Sigmoid colon (tissue), 7 donors: ENCODE measurements at regions of chr1 and their contacts with region 1.

Region 1: GRCh38 chr1:201982623-201983379 is at the start of gene RNPEP:
- DNase-seq: peak; percentile 90
- H3K4me3 ChIP-seq: peak within 1 kb of the TSS; percentile 70 to 100 (median 96)
- H3K27ac ChIP-seq: peak within 1 kb of the TSS; percentile 92 to 96 (median 94)
- H3K4me1 ChIP-seq: peaks cover 0 to 18% (median 15%) of the 10 kb centered on the region in 4 donors
- H3K27me3 ChIP-seq: no peaks in the 10 kb centered on the region
- CTCF ChIP-seq: peak in 2 of 4 experiments; percentile 15 to 18
- EP300 ChIP-seq: no peak
- POLR2A ChIP-seq: no peak
- total RNA-seq, gene RNPEP: 23.9 to 38.5 (median 32.0) TPM

Region 2: GRCh38 chr1:201828820-201829774 is 153.7 kb before region 1 on chr1 and contains the start of gene IPO9:
- intact Hi-C with region 1: loop called (anchors 5 kb)
- DNase-seq: peak; percentile 96
- H3K4me3 ChIP-seq: peak within 1 kb of the TSS; percentile 83 to 99 (median 92)
- H3K27ac ChIP-seq: peak within 1 kb of the TSS; percentile 88 to 97 (median 92)
- H3K4me1 ChIP-seq: peaks cover 0 to 39% (median 35%) of the 10 kb centered on the region in 4 donors
- H3K27me3 ChIP-seq: no peaks in the 10 kb centered on the region
- CTCF ChIP-seq: peak; percentile 87 to 96 (median 92)
- EP300 ChIP-seq: no peak
- POLR2A ChIP-seq: no peak
- total RNA-seq, gene IPO9: 15.5 to 20.2 (median 17.9) TPM

Region 3: GRCh38 chr1:202046227-202046801 is 63.5 kb after region 1 on chr1:
- intact Hi-C with region 1: no loop called
- DNase-seq: no peak
- H3K4me3 ChIP-seq: no peak overlapping the region
- H3K27ac ChIP-seq: no peak overlapping the region
- H3K4me1 ChIP-seq: no peaks in the 10 kb centered on the region
- H3K27me3 ChIP-seq: no peaks in the 10 kb centered on the region
- CTCF ChIP-seq: no peak
- EP300 ChIP-seq: no peak
- POLR2A ChIP-seq: peak in 1 of 2 donors; percentile 24